ENCODE measurements at regions of chr20 and their contacts with region 1.

Region 1: DNA sequence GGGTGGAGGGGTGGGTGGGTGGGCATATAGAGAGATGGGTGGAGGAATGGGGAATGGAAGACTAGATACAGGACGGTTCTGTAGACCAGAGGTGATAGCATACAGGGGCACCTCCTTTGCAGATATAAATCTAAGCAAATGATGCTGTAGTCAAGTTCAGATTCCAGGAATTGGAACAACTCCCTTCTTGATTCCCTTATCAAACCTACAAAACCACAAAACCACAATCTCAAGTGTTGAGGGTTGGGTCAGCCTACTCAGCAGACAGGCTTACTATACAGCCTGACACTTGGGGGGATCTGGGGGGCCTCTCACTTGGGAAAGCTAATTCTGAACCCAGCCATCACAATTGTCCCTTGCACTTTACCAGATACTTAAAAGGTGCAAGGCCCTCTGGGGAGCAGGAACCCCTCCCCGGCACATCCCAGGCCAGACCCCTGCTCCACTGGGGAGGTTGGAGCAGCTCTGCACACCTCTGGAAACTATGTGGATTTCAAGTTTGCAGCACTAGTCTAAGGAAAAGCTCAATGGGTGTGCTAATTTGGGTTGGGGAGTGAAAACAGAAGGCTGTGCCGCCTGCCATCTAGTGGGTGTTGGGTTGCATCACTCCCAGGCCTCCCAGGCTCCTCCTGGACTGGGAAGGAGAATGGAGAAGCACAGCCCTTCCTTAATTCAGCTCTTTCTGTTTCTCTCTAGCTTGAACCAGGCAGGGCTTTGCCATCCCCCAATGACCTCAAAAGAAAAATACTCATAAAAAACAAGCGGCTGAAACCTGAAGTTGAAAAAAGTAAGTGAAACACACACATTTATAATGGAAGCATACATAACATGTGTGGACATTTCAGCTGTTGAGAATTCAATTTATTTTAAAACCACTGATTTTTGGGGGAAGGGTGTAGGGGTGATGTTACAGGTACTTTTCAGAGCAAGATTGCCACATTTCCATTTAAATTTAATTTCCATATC is 121.2 kb upstream of the LAMP5 start:
- DNase-seq: peak; percentile 62 to 65
- H3K4me3 ChIP-seq: no peak overlapping the region
- H3K4me3 Mint-ChIP-seq: no peak overlapping the region
- H3K27ac Mint-ChIP-seq: no peak overlapping the region
- H3K4me1 ChIP-seq: no peaks in the 10 kb centered on the region
- H3K4me1 Mint-ChIP-seq: no peaks in the 10 kb centered on the region
- H3K27me3 ChIP-seq: no peaks in the 10 kb centered on the region
- H3K27me3 Mint-ChIP-seq: peaks cover 6% of the 10 kb centered on the region
- CTCF ChIP-seq: peak; percentile 65 to 92

Region 2: DNA sequence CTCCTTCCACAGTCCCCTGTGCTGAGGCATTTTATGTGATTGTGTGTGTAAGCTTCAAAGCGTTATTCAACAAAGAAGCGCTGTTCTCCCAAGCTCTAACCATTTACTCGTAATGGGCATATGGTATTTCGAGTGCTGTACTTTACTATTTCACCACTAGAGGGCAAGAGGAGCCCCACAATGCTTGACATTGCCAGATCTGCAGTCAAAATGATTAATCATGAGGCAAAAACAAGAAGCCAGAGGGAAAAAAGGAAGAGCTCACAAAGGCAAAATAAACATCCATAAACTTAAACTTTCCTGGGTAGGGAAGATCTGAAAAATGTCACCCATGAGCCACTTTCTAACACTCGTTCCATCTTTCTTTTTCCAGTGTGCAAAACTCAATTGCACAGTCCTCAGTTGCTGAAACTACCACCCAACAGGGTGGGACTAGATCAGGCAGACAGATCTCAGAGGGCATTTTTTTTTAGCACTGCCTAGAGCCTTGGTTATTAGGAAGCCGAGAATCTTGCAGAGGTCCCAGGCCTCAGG is 539.3 kb before region 1 on chr20:
- CTCF ChIA-PET with region 1: interaction called, 5 read pairs
- POLR2A ChIA-PET with region 1: no interaction called
- intact Hi-C with region 1: loop called (anchors 2 kb)
- DNase-seq: peak in 1 of 2 experiments; percentile 66
- H3K4me3 ChIP-seq: no peak overlapping the region
- H3K4me3 Mint-ChIP-seq: no peak overlapping the region
- H3K27ac Mint-ChIP-seq: no peak overlapping the region
- H3K4me1 ChIP-seq: peaks cover 4% of the 10 kb centered on the region; the same call in 1 of the 2 replicates
- H3K4me1 Mint-ChIP-seq: no peaks in the 10 kb centered on the region
- H3K27me3 ChIP-seq: no peaks in the 10 kb centered on the region
- H3K27me3 Mint-ChIP-seq: no peaks in the 10 kb centered on the region
- CTCF ChIP-seq: peak; percentile 74 to 78

Region 3: GRCh38 chr20:9323622-9324021 is 69.6 kb before region 1 on chr20:
- CTCF ChIA-PET with region 1: no interaction called
- POLR2A ChIA-PET with region 1: no interaction called
- intact Hi-C with region 1: loop called (anchors 10 kb)
- DNase-seq: peak; percentile 30 to 41
- H3K4me3 ChIP-seq: no peak overlapping the region
- H3K4me3 Mint-ChIP-seq: no peak overlapping the region
- H3K27ac Mint-ChIP-seq: no peak overlapping the region
- H3K4me1 ChIP-seq: peaks cover 16% of the 10 kb centered on the region
- H3K4me1 Mint-ChIP-seq: no peaks in the 10 kb centered on the region
- H3K27me3 ChIP-seq: no peaks in the 10 kb centered on the region
- H3K27me3 Mint-ChIP-seq: no peaks in the 10 kb centered on the region
- CTCF ChIP-seq: peak; percentile 49 to 54

Region 4: GRCh38 chr20:9407805-9408421 is 14.7 kb after region 1 on chr20:
- CTCF ChIA-PET with region 1: interaction called, 15 read pairs
- POLR2A ChIA-PET with region 1: no interaction called
- intact Hi-C with region 1: no loop called
- DNase-seq: peak; percentile 66 to 76
- H3K4me3 ChIP-seq: no peak overlapping the region
- H3K4me3 Mint-ChIP-seq: no peak overlapping the region
- H3K27ac Mint-ChIP-seq: no peak overlapping the region
- H3K4me1 ChIP-seq: no peaks in the 10 kb centered on the region
- H3K4me1 Mint-ChIP-seq: no peaks in the 10 kb centered on the region
- H3K27me3 ChIP-seq: no peaks in the 10 kb centered on the region
- H3K27me3 Mint-ChIP-seq: no peaks in the 10 kb centered on the region
- CTCF ChIP-seq: peak; percentile 79 to 81

Region 5: GRCh38 chr20:9442858-9443257 is 49.7 kb after region 1 on chr20:
- CTCF ChIA-PET with region 1: no interaction called
- POLR2A ChIA-PET with region 1: no interaction called
- intact Hi-C with region 1: no loop called
- DNase-seq: peak in 1 of 2 experiments; percentile 4
- H3K4me3 ChIP-seq: no peak overlapping the region
- H3K4me3 Mint-ChIP-seq: no peak overlapping the region
- H3K27ac Mint-ChIP-seq: no peak overlapping the region
- H3K4me1 ChIP-seq: no peaks in the 10 kb centered on the region
- H3K4me1 Mint-ChIP-seq: no peaks in the 10 kb centered on the region
- H3K27me3 ChIP-seq: no peaks in the 10 kb centered on the region
- H3K27me3 Mint-ChIP-seq: no peaks in the 10 kb centered on the region
- CTCF ChIP-seq: no peak